Panc1 (cell line): ENCODE measurements at regions of chr21 and their contacts with region 1.

Region 1: DNA sequence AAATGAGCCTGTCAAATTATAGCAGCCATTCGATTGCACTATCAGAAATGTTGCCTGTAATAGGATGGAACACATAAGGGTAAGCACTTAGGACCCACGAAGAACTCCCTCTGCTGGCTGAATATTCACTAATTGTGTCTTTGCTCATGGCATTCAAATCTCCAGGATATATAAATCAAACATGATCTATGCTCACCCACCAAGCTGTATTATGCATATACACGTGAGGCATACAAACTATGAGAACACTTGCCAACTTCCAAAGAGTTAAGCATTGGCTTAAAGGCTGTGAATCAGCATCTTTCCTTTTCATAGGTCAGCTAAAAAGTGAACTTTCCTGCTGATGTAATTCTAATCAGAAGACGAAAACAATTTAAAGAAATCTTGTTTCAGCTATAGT is 34.5 kb downstream of the TMPRSS15 start:
- DNase-seq: no peak
- ATAC-seq: no peak
- H3K4me3 ChIP-seq: no peak overlapping the region
- H3K27ac ChIP-seq: no peak overlapping the region
- H3K4me1 ChIP-seq: no peaks in the 10 kb centered on the region
- H3K27me3 ChIP-seq: no peaks in the 10 kb centered on the region
- CTCF ChIP-seq: peak; percentile 16; the same call in 1 of the 2 replicates

Region 2: GRCh38 chr21:18298228-18298627 is 70.9 kb before region 1 on chr21:
- CTCF ChIA-PET with region 1: no interaction called
- POLR2A ChIA-PET with region 1: no interaction called
- in situ Hi-C with region 1: no loop called
- intact Hi-C with region 1: loop called (anchors 5 kb)
- DNase-seq: no peak
- ATAC-seq: no peak
- H3K4me3 ChIP-seq: no peak overlapping the region
- H3K27ac ChIP-seq: no peak overlapping the region
- H3K4me1 ChIP-seq: no peaks in the 10 kb centered on the region
- H3K27me3 ChIP-seq: no peaks in the 10 kb centered on the region
- CTCF ChIP-seq: no peak